B cell (primary cell): ENCODE measurements at regions of chr7 and their contacts with region 1.

Region 1: DNA sequence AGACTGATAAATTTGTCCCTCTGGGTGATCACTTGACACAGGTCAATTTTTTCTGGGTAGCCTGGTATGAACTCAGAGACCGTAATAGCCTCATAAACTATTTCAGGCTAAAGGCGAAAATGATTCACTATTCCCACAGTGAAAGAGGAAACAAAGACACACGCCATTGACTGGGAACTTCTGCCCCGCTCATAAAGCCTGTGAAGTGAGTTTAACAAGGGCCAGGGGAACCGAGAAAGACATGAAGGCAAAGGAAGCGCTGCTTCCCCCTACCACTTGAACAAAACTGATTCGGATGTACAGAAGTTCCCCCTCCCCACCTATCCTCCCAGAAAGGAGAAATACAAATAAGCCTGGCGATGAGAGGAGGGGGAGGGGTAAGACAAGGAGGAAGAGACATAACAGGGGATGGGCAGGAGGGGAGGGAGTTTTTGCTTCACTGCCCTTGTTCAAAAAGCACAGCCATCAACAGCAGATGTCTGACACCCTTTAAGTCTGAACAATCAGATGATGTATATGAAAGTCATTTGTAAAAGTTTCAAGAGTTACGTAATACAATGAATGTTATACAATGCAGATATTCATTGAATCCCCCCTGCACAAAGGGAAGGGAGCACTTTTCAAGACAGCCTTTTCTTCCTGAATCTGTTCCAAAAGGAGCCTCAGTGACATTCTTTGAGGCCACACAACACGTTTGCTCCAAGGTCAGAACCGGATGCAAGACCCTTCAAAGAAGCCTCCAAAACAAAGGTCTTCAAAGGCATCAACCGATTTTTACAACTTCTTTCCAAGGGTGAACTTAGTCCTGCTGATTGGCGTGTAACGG is 734 bp downstream of the ABCB4 start:
- DNase-seq: peak; percentile 89
- ATAC-seq: peak; percentile 68
- H3K4me3 ChIP-seq: peak overlapping the region; percentile 54 to 87 (median 73)
- H3K4me3 Mint-ChIP-seq: peak overlapping the region; percentile 93
- H3K27ac ChIP-seq: peak overlapping the region; percentile 87 to 92
- H3K27ac Mint-ChIP-seq: peak overlapping the region; percentile 97
- H3K4me1 ChIP-seq: peaks cover 29 to 42% of the 10 kb centered on the region in 2 donors
- H3K4me1 Mint-ChIP-seq: peaks cover 46% of the 10 kb centered on the region
- H3K27me3 ChIP-seq: no peaks in the 10 kb centered on the region
- H3K27me3 Mint-ChIP-seq: no peaks in the 10 kb centered on the region
- CTCF ChIP-seq: no peak

Region 2: GRCh38 chr7:87206361-87206760 is 268.4 kb before region 1 on chr7:
- CTCF ChIA-PET with region 1: no interaction called
- POLR2A ChIA-PET with region 1: no interaction called
- intact Hi-C with region 1: no loop called
- DNase-seq: no peak
- ATAC-seq: no peak
- H3K4me3 ChIP-seq: no peak overlapping the region
- H3K4me3 Mint-ChIP-seq: no peak overlapping the region
- H3K27ac ChIP-seq: peak overlapping the region in 1 of 2 donors; percentile 6
- H3K27ac Mint-ChIP-seq: peak overlapping the region; percentile 62
- H3K4me1 ChIP-seq: peaks cover 53 to 56% of the 10 kb centered on the region in 2 donors
- H3K4me1 Mint-ChIP-seq: peaks cover 77% of the 10 kb centered on the region
- H3K27me3 ChIP-seq: no peaks in the 10 kb centered on the region
- H3K27me3 Mint-ChIP-seq: no peaks in the 10 kb centered on the region
- CTCF ChIP-seq: no peak

Region 3: GRCh38 chr7:87345166-87345927 is 129.4 kb before region 1 on chr7 and contains the start of gene CROT:
- CTCF ChIA-PET with region 1: no interaction called
- POLR2A ChIA-PET with region 1: no interaction called
- intact Hi-C with region 1: loop called (anchors 2 kb)
- DNase-seq: peak; percentile 94
- ATAC-seq: peak; percentile 98
- H3K4me3 ChIP-seq: peak within 1 kb of the TSS; percentile 51 to 86 (median 73)
- H3K4me3 Mint-ChIP-seq: peak within 1 kb of the TSS; percentile 97
- H3K27ac ChIP-seq: peak within 1 kb of the TSS; percentile 67 to 74
- H3K27ac Mint-ChIP-seq: peak within 1 kb of the TSS; percentile 94
- H3K4me1 ChIP-seq: peaks cover 6 to 15% of the 10 kb centered on the region in 2 donors
- H3K4me1 Mint-ChIP-seq: peaks cover 27% of the 10 kb centered on the region
- H3K27me3 ChIP-seq: no peaks in the 10 kb centered on the region
- H3K27me3 Mint-ChIP-seq: no peaks in the 10 kb centered on the region
- CTCF ChIP-seq: no peak
- total RNA-seq, gene CROT: 12.4 and 13.3 TPM in 2 replicates

Region 4: GRCh38 chr7:87456247-87456646 is 18.5 kb before region 1 on chr7:
- CTCF ChIA-PET with region 1: no interaction called
- POLR2A ChIA-PET with region 1: no interaction called
- intact Hi-C with region 1: no loop called
- DNase-seq: no peak
- ATAC-seq: no peak
- H3K4me3 ChIP-seq: no peak overlapping the region
- H3K4me3 Mint-ChIP-seq: no peak overlapping the region
- H3K27ac ChIP-seq: peak overlapping the region in 1 of 2 donors; percentile 8
- H3K27ac Mint-ChIP-seq: no peak overlapping the region
- H3K4me1 ChIP-seq: no peaks in the 10 kb centered on the region
- H3K4me1 Mint-ChIP-seq: no peaks in the 10 kb centered on the region
- H3K27me3 ChIP-seq: no peaks in the 10 kb centered on the region
- H3K27me3 Mint-ChIP-seq: no peaks in the 10 kb centered on the region
- CTCF ChIP-seq: no peak

Region 5: GRCh38 chr7:87506246-87507180 is 31.8 kb after region 1 on chr7:
- CTCF ChIA-PET with region 1: no interaction called
- POLR2A ChIA-PET with region 1: interaction called, 3 read pairs
- intact Hi-C with region 1: loop called (anchors 2 kb)
- DNase-seq: peak; percentile 10
- ATAC-seq: peak; percentile 17
- H3K4me3 ChIP-seq: no peak overlapping the region
- H3K4me3 Mint-ChIP-seq: no peak overlapping the region
- H3K27ac ChIP-seq: peak overlapping the region in 1 of 2 donors; percentile 16
- H3K27ac Mint-ChIP-seq: peak overlapping the region; percentile 8
- H3K4me1 ChIP-seq: peaks cover 18 to 19% of the 10 kb centered on the region in 2 donors
- H3K4me1 Mint-ChIP-seq: peaks cover 29% of the 10 kb centered on the region
- H3K27me3 ChIP-seq: no peaks in the 10 kb centered on the region
- H3K27me3 Mint-ChIP-seq: no peaks in the 10 kb centered on the region
- CTCF ChIP-seq: peak; percentile 53

Region 6: DNA sequence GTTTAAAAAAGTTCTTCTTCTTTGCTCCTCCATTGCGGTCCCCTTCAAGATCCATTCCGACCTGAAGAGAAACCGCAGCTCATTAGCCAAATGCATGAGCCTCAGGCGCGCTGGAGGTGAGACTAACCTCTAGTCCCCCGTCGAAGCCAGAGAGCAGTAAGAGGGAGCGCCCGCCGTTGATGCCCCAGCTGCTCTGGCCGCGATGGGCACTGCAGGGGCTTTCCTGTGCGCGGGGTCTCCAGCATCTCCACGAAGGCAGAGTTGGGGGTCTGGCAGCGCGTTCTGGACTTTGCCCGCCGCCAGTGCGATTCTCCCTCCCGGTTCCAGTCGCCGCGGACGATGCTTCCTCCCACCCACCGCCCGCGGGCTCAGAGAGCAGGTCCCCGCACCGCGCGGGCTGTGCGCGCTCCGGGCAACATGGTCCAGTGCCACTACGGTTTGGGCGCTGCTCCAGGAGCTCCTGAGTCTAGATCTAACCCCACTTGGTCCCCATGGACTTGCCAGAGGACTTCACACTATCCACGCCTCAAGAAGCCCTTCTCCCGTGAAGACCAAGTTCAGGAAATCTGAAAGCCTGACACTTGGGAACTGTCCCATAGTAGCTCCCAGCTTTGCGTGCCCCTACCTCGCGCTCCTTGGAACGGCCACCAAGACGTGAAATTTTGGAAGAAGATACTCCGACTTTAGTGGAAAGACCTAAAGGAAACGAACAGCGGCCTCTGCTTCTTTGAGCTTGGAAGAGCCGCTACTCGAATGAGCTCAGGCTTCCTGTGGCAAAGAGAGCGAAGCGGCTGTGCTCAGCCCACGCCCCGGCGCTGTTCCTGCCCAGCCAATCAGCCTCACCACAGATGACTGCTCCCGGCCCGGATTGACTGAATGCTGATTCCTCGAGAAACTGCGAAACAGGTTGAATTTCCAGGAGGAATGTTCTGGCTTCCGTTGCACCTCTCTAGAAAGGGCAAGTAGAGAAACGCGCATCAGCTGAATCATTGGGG is 125.7 kb after region 1 on chr7 and contains the start of gene ABCB1:
- CTCF ChIA-PET with region 1: interaction called, 6 read pairs
- POLR2A ChIA-PET with region 1: no interaction called
- intact Hi-C with region 1: loop called (anchors 2 kb)
- DNase-seq: peak; percentile 68
- ATAC-seq: peak; percentile 62
- H3K4me3 ChIP-seq: peak within 1 kb of the TSS; percentile 46 to 83 (median 73)
- H3K4me3 Mint-ChIP-seq: peak within 1 kb of the TSS; percentile 78
- H3K27ac ChIP-seq: peak within 1 kb of the TSS; percentile 49 to 67
- H3K27ac Mint-ChIP-seq: peak within 1 kb of the TSS; percentile 82
- H3K4me1 ChIP-seq: peaks cover 17 to 23% of the 10 kb centered on the region in 2 donors
- H3K4me1 Mint-ChIP-seq: peaks cover 22% of the 10 kb centered on the region
- H3K27me3 ChIP-seq: peaks cover 0 to 11% (median 3%) of the 10 kb centered on the region in 4 experiments
- H3K27me3 Mint-ChIP-seq: peaks cover 32% of the 10 kb centered on the region
- CTCF ChIP-seq: no peak
- total RNA-seq, gene ABCB1: 21.7 and 27.7 TPM in 2 replicates

Region 7: GRCh38 chr7:87712571-87712970 is 237.8 kb after region 1 on chr7:
- CTCF ChIA-PET with region 1: no interaction called
- POLR2A ChIA-PET with region 1: no interaction called
- intact Hi-C with region 1: no loop called
- DNase-seq: no peak
- ATAC-seq: no peak
- H3K4me3 ChIP-seq: no peak overlapping the region
- H3K4me3 Mint-ChIP-seq: no peak overlapping the region
- H3K27ac ChIP-seq: no peak overlapping the region
- H3K27ac Mint-ChIP-seq: no peak overlapping the region
- H3K4me1 ChIP-seq: no peaks in the 10 kb centered on the region
- H3K4me1 Mint-ChIP-seq: no peaks in the 10 kb centered on the region
- H3K27me3 ChIP-seq: no peaks in the 10 kb centered on the region
- H3K27me3 Mint-ChIP-seq: peaks cover 7% of the 10 kb centered on the region
- CTCF ChIP-seq: no peak

Region 8: DNA sequence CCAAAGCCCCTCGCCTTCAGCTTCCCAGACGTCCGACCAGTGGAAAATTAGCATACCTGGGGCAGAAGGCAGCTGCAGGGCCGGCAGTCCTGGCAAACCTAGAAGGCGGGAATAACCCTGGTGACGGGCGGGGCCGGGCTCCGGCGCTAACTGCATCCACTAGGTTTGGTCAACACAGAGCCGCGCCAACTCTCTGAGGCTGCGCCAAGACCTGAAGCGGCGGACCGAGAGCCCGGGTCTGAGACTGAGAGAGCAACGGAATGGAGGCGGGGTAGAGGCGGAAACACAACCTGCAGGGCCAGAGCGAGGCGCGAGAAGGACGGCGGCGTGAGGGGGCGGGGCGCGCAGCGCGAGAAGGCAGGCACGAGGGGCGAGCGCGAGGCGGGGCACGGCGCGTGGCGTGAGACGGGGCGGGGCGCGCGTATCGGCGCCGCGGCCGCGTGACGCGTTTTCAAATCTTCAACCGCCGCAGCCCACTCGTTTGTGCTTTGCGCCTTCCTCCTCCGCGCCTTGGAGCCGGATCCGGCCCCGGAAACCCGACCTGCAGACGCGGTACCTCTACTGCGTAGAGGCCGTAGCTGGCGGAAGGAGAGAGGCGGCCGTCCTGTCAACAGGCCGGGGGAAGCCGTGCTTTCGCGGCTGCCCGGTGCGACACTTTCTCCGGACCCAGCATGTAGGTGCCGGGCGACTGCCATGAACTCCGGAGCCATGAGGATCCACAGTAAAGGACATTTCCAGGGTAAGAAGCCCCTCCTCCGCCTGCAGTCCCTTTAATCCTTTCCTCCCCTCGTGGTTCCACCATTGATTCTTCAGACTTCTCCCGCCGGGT is 401.5 kb after region 1 on chr7 and contains the starts of genes DBF4 and SLC25A40:
- CTCF ChIA-PET with region 1: no interaction called
- POLR2A ChIA-PET with region 1: no interaction called
- intact Hi-C with region 1: loop called (anchors 1 kb)
- DNase-seq: peak; percentile 98
- ATAC-seq: peak; percentile 92
- H3K4me3 ChIP-seq: peak within 1 kb of the TSS; percentile 73 to 98 (median 93)
- H3K4me3 Mint-ChIP-seq: peak within 1 kb of the TSS; percentile 76
- H3K27ac ChIP-seq: peak within 1 kb of the TSS; percentile 83 to 93
- H3K27ac Mint-ChIP-seq: peak within 1 kb of the TSS; percentile 98
- H3K4me1 ChIP-seq: peaks cover 18 to 24% of the 10 kb centered on the region in 2 donors
- H3K4me1 Mint-ChIP-seq: peaks cover 37% of the 10 kb centered on the region
- H3K27me3 ChIP-seq: no peaks in the 10 kb centered on the region
- H3K27me3 Mint-ChIP-seq: no peaks in the 10 kb centered on the region
- CTCF ChIP-seq: no peak
- total RNA-seq, gene DBF4: 21.0 and 27.6 TPM in 2 replicates
- total RNA-seq, gene SLC25A40: 28.1 and 34.5 TPM in 2 replicates

Region 9: DNA sequence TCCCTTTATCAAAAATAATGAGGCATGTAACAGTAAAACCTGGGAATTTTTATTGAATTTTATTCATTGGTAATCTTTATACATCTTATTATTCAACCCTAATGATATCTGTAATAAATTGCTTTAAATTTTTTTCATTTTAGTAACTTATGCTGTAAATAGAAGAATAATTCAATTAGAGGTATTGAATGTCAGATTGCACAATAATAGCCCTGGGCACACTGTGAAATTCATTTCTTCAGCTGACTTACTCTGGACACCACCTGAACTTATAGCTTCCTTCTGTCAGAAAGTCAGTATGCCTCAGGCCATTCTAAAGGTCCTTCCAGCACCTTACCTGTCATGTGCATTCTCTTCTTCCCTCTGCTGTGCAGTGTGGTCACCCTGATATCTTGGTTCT is 518.5 kb after region 1 on chr7:
- CTCF ChIA-PET with region 1: no interaction called
- POLR2A ChIA-PET with region 1: no interaction called
- intact Hi-C with region 1: no loop called
- DNase-seq: no peak
- ATAC-seq: no peak
- H3K4me3 ChIP-seq: no peak overlapping the region
- H3K4me3 Mint-ChIP-seq: no peak overlapping the region
- H3K27ac ChIP-seq: no peak overlapping the region
- H3K27ac Mint-ChIP-seq: no peak overlapping the region
- H3K4me1 ChIP-seq: no peaks in the 10 kb centered on the region
- H3K4me1 Mint-ChIP-seq: no peaks in the 10 kb centered on the region
- H3K27me3 ChIP-seq: no peaks in the 10 kb centered on the region
- H3K27me3 Mint-ChIP-seq: no peaks in the 10 kb centered on the region
- CTCF ChIP-seq: no peak